ENCODE measurements at regions of chr6 and their contacts with region 1.

Region 1: GRCh38 chr6:137136065-137136464 is 37.4 kb downstream of the IL22RA2 start:
- DNase-seq: no peak
- H3K4me3 ChIP-seq: no peak overlapping the region
- H3K27ac ChIP-seq: no peak overlapping the region
- H3K4me1 ChIP-seq: no peaks in the 10 kb centered on the region
- H3K27me3 ChIP-seq: peaks cover 2% of the 10 kb centered on the region
- CTCF ChIP-seq: peak; percentile 63 to 71

Region 2: DNA sequence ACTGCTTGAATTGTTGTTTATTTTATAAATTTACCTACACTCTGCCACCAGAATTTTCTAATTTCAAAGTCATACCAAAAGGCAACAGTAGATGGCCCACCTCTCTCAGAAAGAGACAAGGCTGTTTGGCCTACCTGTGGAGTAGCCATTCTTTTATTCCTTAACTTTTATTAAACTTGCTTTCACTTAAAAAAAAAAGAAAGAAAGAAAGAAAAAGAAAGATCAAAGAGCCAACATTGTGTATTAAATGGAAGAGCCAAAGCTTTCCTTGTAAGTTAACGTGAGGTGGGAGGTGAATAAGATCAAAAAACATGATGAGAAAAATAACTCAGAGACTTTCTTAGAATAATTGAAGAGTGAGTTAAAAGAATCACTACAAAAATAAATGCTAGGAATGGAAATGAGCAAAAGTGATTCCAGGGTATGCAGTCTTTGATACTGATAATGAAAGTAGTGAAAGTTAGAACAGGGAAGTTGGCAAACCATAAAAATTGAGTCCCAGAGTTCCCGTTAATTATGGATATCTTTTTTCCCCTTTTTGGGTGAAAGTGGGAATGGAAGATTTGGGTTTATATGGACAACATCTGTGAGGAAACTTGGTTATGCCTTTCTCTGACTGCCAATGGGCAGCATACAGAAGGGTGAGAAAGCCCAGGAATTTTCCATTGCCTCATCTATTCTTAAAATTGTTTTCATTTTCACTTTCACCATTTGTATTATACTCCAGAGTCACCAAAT is 1990.8 kb before region 1 on chr6:
- CTCF ChIA-PET with region 1: no interaction called
- dilution Hi-C with region 1: no loop called
- in situ Hi-C with region 1: no loop called
- intact Hi-C with region 1: no loop called
- DNase-seq: peak; percentile 24
- H3K4me3 ChIP-seq: no peak overlapping the region
- H3K27ac ChIP-seq: no peak overlapping the region
- H3K4me1 ChIP-seq: peaks cover 10% of the 10 kb centered on the region
- H3K27me3 ChIP-seq: no peaks in the 10 kb centered on the region
- CTCF ChIP-seq: peak; percentile 53 to 74

Region 3: DNA sequence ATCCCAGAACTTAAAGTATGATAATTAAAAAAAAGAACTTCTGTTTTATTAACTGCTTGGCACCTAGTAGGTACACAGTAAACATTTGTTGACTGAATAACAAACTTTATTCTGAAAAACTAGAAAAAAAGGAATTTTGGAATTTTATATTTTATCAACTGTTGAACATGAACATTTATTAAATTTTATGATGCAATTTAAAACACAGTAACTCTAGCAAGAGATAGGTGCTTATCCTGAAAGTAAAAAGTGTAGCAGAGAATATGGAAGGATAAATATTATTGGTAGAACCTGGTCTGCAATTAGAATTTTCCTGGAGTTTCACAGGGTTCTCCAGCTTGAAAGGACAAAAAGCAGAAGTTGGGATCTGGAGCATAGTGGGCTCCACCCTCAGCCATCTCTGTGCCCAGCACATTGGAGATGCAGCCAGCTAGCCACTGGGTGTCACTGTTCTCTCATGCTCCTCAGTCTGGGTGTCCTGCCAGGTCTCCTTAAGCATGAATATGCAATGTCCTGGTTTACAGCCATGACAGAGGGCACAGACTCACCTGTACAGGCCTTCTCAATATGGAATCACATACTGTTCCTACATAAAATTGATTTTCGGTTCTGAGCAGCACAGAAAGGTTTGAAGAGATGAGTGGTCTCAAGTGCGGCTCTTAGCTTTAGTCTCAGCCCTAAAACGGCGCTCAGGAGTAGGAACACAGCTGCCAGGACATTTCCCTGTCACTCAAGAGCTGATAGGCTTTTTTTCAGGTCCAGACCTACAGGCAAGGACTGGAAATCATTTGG is 59.6 kb before region 1 on chr6:
- CTCF ChIA-PET with region 1: no interaction called
- dilution Hi-C with region 1: no loop called
- in situ Hi-C with region 1: no loop called
- intact Hi-C with region 1: loop called (anchors 5 kb)
- DNase-seq: peak; percentile 59
- H3K4me3 ChIP-seq: no peak overlapping the region
- H3K27ac ChIP-seq: no peak overlapping the region
- H3K4me1 ChIP-seq: no peaks in the 10 kb centered on the region
- H3K27me3 ChIP-seq: no peaks in the 10 kb centered on the region
- CTCF ChIP-seq: peak; percentile 92 to 94

Region 4: DNA sequence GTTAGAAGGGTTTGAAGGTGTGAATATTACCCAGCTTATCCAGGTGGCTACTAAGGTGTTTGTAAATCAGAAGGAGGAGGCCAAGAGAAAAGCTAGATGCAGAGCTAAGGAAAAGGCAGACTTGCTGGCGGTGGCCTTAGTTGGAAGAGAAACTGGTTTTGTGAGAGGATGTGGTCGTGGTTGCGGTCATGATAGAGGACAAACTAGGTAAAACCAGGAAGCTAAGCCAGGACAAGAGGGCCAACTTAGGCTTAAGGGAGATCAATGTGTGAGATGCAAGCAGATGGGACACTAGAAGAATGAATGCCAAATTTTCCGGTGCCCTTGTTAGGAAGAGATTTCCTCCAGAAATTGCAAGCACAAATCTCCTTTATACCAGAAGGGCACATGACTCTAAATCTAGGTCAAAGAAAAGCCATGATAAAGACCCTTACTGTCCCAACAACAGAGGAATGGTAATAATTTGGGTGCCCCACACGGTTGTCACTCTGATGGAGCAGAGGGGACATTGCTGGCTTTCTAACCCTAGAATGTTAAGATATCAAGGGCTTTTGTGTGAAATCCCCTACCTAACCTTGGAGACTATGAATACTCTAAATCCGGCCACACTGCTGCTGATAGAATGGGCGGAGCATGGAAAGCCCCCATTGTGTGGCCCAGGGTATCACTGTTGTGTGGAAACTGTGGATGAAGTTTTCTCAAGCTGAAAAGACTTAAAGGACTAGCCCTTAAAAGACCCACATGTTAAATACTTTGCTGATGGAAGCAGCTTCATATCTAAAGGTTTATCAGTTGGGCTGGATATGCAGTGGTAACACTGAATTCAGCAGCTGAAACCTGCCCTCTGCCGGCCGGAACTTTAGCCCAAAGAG is 29.5 kb after region 1 on chr6:
- CTCF ChIA-PET with region 1: interaction called, 3 read pairs
- dilution Hi-C with region 1: no loop called
- in situ Hi-C with region 1: no loop called
- intact Hi-C with region 1: loop called (anchors 1 kb)
- DNase-seq: peak; percentile 25
- H3K4me3 ChIP-seq: no peak overlapping the region
- H3K27ac ChIP-seq: no peak overlapping the region
- H3K4me1 ChIP-seq: peaks cover 16% of the 10 kb centered on the region
- H3K27me3 ChIP-seq: no peaks in the 10 kb centered on the region
- CTCF ChIP-seq: peak; percentile 34 to 58

Region 5: GRCh38 chr6:137202078-137202477 is 66.0 kb after region 1 on chr6:
- CTCF ChIA-PET with region 1: no interaction called
- dilution Hi-C with region 1: no loop called
- in situ Hi-C with region 1: no loop called
- intact Hi-C with region 1: loop called (anchors 1 kb)
- DNase-seq: no peak
- H3K4me3 ChIP-seq: no peak overlapping the region
- H3K27ac ChIP-seq: no peak overlapping the region
- H3K4me1 ChIP-seq: no peaks in the 10 kb centered on the region
- H3K27me3 ChIP-seq: no peaks in the 10 kb centered on the region
- CTCF ChIP-seq: peak; percentile 67 to 81

Region 6: GRCh38 chr6:137224799-137225198 is 88.7 kb after region 1 on chr6:
- CTCF ChIA-PET with region 1: no interaction called
- dilution Hi-C with region 1: no loop called
- in situ Hi-C with region 1: no loop called
- intact Hi-C with region 1: no loop called
- DNase-seq: no peak
- H3K4me3 ChIP-seq: no peak overlapping the region
- H3K27ac ChIP-seq: no peak overlapping the region
- H3K4me1 ChIP-seq: peaks cover 2% of the 10 kb centered on the region
- H3K27me3 ChIP-seq: no peaks in the 10 kb centered on the region
- CTCF ChIP-seq: no peak

Region 7: GRCh38 chr6:137271245-137272183 is 135.4 kb after region 1 on chr6:
- CTCF ChIA-PET with region 1: interaction called, 3 read pairs
- dilution Hi-C with region 1: no loop called
- in situ Hi-C with region 1: no loop called
- intact Hi-C with region 1: loop called (anchors 1 kb)
- DNase-seq: peak; percentile 41
- H3K4me3 ChIP-seq: no peak overlapping the region
- H3K27ac ChIP-seq: no peak overlapping the region
- H3K4me1 ChIP-seq: no peaks in the 10 kb centered on the region
- H3K27me3 ChIP-seq: no peaks in the 10 kb centered on the region
- CTCF ChIP-seq: peak; percentile 92 to 98

Measured in mammary epithelial cell (primary cell).